Activated CD4-positive, alpha-beta T cell treated with anti-CD3 and anti-CD28 coated beads, Interleukin-2, amount 10 ng/mL, durations not matched to agents 7 days and 5 days (primary cell): ENCODE measurements at regions of chr4 and their contacts with region 1.

Region 1: DNA sequence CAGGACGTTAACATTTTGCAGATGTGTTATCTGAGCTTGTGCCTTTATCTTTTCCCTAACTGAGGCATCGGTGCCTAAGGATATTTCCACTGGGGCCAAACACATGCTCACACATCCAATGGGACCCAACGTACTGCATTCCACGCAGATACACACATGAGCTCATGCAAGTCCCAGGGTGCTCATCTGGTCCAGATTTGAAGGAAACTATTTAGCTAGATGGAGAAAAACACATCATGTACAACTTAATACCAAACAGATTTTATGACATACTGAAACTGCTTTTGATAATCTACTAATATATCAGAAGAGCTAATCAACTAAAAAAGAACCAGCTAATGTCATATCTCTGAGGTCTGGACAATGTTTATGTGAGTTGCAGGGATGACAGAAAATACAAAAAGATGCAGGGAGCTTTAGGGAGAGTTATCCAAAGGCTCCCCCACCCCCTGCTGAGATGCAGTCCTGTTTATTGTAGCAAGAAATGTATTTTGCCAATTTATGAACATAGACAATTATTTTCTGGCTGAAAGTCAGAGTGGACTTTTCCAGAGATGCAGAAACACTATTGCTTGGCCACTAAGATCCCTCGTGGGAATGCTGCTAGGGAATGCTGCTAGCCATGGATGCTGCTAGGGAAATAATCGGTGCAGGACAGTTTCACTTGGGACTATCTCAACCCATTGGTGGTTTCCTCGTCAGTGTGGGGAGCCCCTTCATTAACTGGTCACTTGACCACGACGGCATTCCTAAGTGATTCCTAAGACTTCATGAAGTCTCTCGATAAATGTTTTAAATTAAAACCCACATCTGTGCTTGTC is 172.8 kb downstream of the SMIM20 start:
- DNase-seq: no peak
- H3K4me3 Mint-ChIP-seq: no peak overlapping the region
- H3K27ac Mint-ChIP-seq: no peak overlapping the region
- H3K4me1 Mint-ChIP-seq: peaks cover 44% of the 10 kb centered on the region
- H3K27me3 Mint-ChIP-seq: no peaks in the 10 kb centered on the region

Region 2: GRCh38 chr4:26076000-26076587 is 10.7 kb before region 1 on chr4:
- CTCF ChIA-PET with region 1: interaction called, 11 read pairs
- POLR2A ChIA-PET with region 1: interaction called, 3 read pairs
- DNase-seq: peak; percentile 54
- H3K4me3 Mint-ChIP-seq: no peak overlapping the region
- H3K27ac Mint-ChIP-seq: peak overlapping the region; percentile 71
- H3K4me1 Mint-ChIP-seq: peaks cover 52% of the 10 kb centered on the region
- H3K27me3 Mint-ChIP-seq: no peaks in the 10 kb centered on the region

Region 3: DNA sequence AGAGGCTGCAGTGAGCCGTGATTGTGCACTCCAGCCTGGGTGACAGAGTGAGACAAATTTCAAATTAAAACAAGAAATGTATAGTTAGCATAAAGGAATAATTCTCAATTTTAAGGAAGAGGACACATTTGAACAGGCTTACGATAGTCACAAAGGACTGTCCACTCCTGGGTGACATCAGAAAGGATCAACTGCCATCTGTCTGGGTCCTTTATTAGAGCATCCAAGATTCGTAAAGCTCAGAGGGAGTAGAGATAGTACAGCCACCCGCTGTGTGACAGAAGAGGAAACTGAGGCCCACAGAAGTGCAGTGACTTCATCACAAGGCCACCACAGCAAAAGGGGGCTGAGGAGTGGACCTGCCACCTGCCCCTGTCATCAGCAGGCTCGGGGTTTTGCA is 84.7 kb after region 1 on chr4:
- CTCF ChIA-PET with region 1: no interaction called
- POLR2A ChIA-PET with region 1: no interaction called
- DNase-seq: no peak
- H3K4me3 Mint-ChIP-seq: no peak overlapping the region
- H3K27ac Mint-ChIP-seq: no peak overlapping the region
- H3K4me1 Mint-ChIP-seq: peaks cover 4% of the 10 kb centered on the region
- H3K27me3 Mint-ChIP-seq: peaks cover 4% of the 10 kb centered on the region